ENCODE measurements at regions of chr2 and their contacts with region 1.

Region 1: DNA sequence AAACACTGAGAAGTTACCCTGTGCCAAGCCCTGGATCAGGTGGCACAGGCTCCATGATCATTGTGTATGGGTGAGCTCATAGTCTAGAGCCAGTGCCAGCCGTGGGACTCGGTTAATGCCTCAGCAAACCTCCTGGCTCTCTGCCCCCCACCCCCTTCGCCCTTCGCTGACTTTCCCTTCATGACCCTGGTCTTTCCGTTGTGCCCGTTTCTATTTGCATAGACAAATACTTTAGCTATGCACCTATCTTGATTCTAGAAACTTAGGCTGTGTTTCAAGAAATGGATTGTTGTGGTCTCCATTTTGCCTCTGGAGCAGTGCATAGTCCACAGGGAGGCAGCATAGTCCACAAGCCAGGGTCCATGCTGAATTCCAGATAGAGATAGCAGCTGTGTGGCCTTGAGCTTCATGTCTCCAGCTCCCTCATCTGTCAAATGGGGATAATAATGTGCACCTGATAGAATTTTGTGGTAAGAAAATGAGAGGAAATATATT is 44.8 kb upstream of the KDM3A start:
- DNase-seq: peak in 1 of 2 donors; percentile 56
- ATAC-seq: peak; percentile 64
- H3K4me3 ChIP-seq: no peak overlapping the region
- H3K27ac ChIP-seq: no peak overlapping the region
- H3K4me1 ChIP-seq: peaks cover 0 to 5% of the 10 kb centered on the region in 2 donors
- H3K27me3 ChIP-seq: peaks cover 0 to 1% of the 10 kb centered on the region in 2 donors

Region 2: GRCh38 chr2:86440631-86441391 is 44.5 kb after region 1 on chr2 and contains the start of gene KDM3A:
- intact Hi-C with region 1: no loop called
- DNase-seq: peak; percentile 100
- ATAC-seq: peak; percentile 97
- H3K4me3 ChIP-seq: peak within 1 kb of the TSS; percentile 94 to 97
- H3K27ac ChIP-seq: peak within 1 kb of the TSS; percentile 95 to 99
- H3K4me1 ChIP-seq: peaks cover 5 to 12% of the 10 kb centered on the region in 2 donors
- H3K27me3 ChIP-seq: no peaks in the 10 kb centered on the region
- total RNA-seq, gene KDM3A: 44.9 to 75.3 TPM

Region 3: GRCh38 chr2:86453836-86454235 is 57.5 kb after region 1 on chr2:
- intact Hi-C with region 1: no loop called
- DNase-seq: no peak
- ATAC-seq: peak; percentile 56
- H3K4me3 ChIP-seq: no peak overlapping the region
- H3K27ac ChIP-seq: peak overlapping the region in 1 of 2 donors; percentile 18
- H3K4me1 ChIP-seq: peaks cover 0 to 10% of the 10 kb centered on the region in 2 donors
- H3K27me3 ChIP-seq: no peaks in the 10 kb centered on the region

Region 4: GRCh38 chr2:86464652-86465051 is 68.3 kb after region 1 on chr2:
- intact Hi-C with region 1: no loop called
- DNase-seq: peak in 1 of 2 donors; percentile 51
- ATAC-seq: no peak
- H3K4me3 ChIP-seq: no peak overlapping the region
- H3K27ac ChIP-seq: no peak overlapping the region
- H3K4me1 ChIP-seq: peaks cover 0 to 4% of the 10 kb centered on the region in 2 donors
- H3K27me3 ChIP-seq: no peaks in the 10 kb centered on the region

Region 5: DNA sequence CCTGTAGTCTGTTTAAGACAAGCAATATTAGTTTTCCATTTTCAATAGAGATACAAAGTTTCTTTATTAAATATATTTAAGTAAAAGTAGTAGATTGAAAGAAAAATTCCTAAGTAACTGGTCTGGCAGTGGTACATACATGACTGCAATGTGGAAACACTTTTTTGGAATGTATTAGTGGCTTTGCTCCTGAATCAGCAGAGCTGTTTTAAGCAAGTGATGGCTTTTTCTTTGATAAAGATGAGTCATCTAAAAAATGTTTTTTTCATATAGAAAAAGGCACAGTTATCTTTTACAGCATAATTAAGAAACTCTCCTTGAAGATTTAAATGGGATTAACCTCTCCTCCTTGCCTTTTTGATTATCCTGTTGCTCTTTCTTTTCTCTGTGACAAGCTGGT is 79.8 kb after region 1 on chr2:
- intact Hi-C with region 1: no loop called
- DNase-seq: no peak
- ATAC-seq: no peak
- H3K4me3 ChIP-seq: no peak overlapping the region
- H3K27ac ChIP-seq: peak overlapping the region; percentile 30 to 32
- H3K4me1 ChIP-seq: peaks cover 6 to 8% of the 10 kb centered on the region in 2 donors
- H3K27me3 ChIP-seq: no peaks in the 10 kb centered on the region

Region 6: GRCh38 chr2:86750240-86750839 is 354.0 kb after region 1 on chr2:
- intact Hi-C with region 1: loop called in 1 of 2 experiments (anchors 10 kb)
- DNase-seq: no peak
- ATAC-seq: no peak
- H3K4me3 ChIP-seq: no peak overlapping the region
- H3K27ac ChIP-seq: no peak overlapping the region
- H3K4me1 ChIP-seq: no peaks in the 10 kb centered on the region
- H3K27me3 ChIP-seq: no peaks in the 10 kb centered on the region

Measured in aorta (tissue), 5 donors.